ENCODE measurements at regions of chr18 and their contacts with region 1.

Region 1: GRCh38 chr18:77207540-77207939 is 42.1 kb upstream of the GALR1 start:
- DNase-seq: peak; percentile 65
- ATAC-seq: peak; percentile 42
- H3K4me3 ChIP-seq: no peak overlapping the region
- H3K27ac ChIP-seq: peak overlapping the region; percentile 36; the same call in 1 of the 2 replicates
- H3K4me1 ChIP-seq: peaks cover 15% of the 10 kb centered on the region
- H3K27me3 ChIP-seq: no peaks in the 10 kb centered on the region
- CTCF ChIP-seq: peak; percentile 62
- POLR2A ChIP-seq: no peak
- RAD21 ChIP-seq: peak; percentile 40

Region 2: GRCh38 chr18:76922107-76922506 is 285.4 kb before region 1 on chr18:
- CTCF ChIA-PET with region 1: interaction called, 4 read pairs
- POLR2A ChIA-PET with region 1: no interaction called
- dilution Hi-C with region 1: no loop called
- in situ Hi-C with region 1: no loop called
- intact Hi-C with region 1: loop called (anchors 2 kb)
- DNase-seq: peak; percentile 58
- ATAC-seq: peak; percentile 93
- H3K4me3 ChIP-seq: no peak overlapping the region
- H3K27ac ChIP-seq: no peak overlapping the region
- H3K4me1 ChIP-seq: peaks cover 5% of the 10 kb centered on the region
- H3K27me3 ChIP-seq: no peaks in the 10 kb centered on the region
- CTCF ChIP-seq: peak; percentile 63
- POLR2A ChIP-seq: no peak
- RAD21 ChIP-seq: peak; percentile 68

Region 3: GRCh38 chr18:77054606-77055428 is 152.7 kb before region 1 on chr18:
- CTCF ChIA-PET with region 1: interaction called, 4 read pairs
- POLR2A ChIA-PET with region 1: no interaction called
- dilution Hi-C with region 1: no loop called
- in situ Hi-C with region 1: no loop called
- intact Hi-C with region 1: loop called (anchors 1 kb)
- DNase-seq: peak; percentile 93
- ATAC-seq: peak; percentile 99
- H3K4me3 ChIP-seq: no peak overlapping the region; the same call in 1 of the 2 replicates
- H3K27ac ChIP-seq: peak overlapping the region; percentile 77
- H3K4me1 ChIP-seq: peaks cover 19% of the 10 kb centered on the region
- H3K27me3 ChIP-seq: no peaks in the 10 kb centered on the region
- CTCF ChIP-seq: peak; percentile 97
- POLR2A ChIP-seq: no peak
- RAD21 ChIP-seq: peak; percentile 82

Region 4: GRCh38 chr18:77101410-77102258 is 105.9 kb before region 1 on chr18:
- CTCF ChIA-PET with region 1: interaction called, 5 read pairs
- POLR2A ChIA-PET with region 1: interaction called, 3 read pairs
- dilution Hi-C with region 1: no loop called
- in situ Hi-C with region 1: no loop called
- intact Hi-C with region 1: loop called (anchors 2 kb)
- DNase-seq: peak; percentile 97
- ATAC-seq: peak; percentile 67
- H3K4me3 ChIP-seq: peak overlapping the region; percentile 3; the same call in 1 of the 2 replicates
- H3K27ac ChIP-seq: peak overlapping the region; percentile 81
- H3K4me1 ChIP-seq: peaks cover 42% of the 10 kb centered on the region
- H3K27me3 ChIP-seq: no peaks in the 10 kb centered on the region
- CTCF ChIP-seq: no peak
- POLR2A ChIP-seq: peak; percentile 41; the same call in 1 of the 2 replicates
- RAD21 ChIP-seq: peak; percentile 25; the same call in 1 of the 2 replicates

Region 5: DNA sequence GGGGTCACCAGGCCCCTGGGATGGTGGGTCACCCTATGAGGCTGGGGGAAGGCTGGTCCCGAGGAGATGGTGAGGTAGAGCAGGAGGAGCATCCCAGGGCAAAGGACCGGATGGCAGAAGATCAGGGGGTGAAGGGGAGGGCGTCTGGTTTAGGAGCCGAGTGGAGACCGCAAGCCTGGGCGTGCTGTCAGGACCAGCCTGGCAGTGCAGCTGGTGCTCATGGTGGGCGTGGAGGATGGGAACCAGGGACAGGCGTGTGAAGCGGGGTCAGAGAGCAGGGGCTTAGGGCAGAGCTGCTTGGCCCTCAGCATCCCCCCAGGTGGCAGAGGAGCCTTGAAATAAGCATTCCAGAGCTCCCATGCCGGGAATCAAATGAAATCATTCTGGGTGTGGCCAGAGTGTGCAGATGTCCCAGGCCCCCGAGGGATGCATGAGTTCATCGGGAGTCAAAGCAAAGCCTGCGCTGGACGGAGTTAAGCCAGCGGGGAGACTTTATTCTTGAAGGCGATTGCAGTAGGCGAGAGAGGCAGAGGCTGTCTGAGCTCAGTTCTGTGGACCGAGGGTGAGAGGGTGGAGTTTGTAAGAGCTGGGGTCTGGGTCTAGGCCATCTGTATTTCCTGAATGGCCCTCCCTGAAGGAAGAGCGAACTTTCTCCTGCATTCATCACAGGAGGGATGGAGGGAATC is 41.9 kb before region 1 on chr18:
- CTCF ChIA-PET with region 1: no interaction called
- POLR2A ChIA-PET with region 1: no interaction called
- dilution Hi-C with region 1: no loop called
- in situ Hi-C with region 1: no loop called
- intact Hi-C with region 1: no loop called
- DNase-seq: no peak
- ATAC-seq: no peak; the same call in 1 of the 2 replicates
- H3K4me3 ChIP-seq: no peak overlapping the region
- H3K27ac ChIP-seq: no peak overlapping the region
- H3K4me1 ChIP-seq: peaks cover 2% of the 10 kb centered on the region; the same call in 1 of the 2 replicates
- H3K27me3 ChIP-seq: peaks cover 21% of the 10 kb centered on the region
- CTCF ChIP-seq: no peak
- POLR2A ChIP-seq: no peak
- RAD21 ChIP-seq: no peak

Measured in IMR-90 (cell line).